ENCODE measurements at regions of chr16 and their contacts with region 1.

Region 1: DNA sequence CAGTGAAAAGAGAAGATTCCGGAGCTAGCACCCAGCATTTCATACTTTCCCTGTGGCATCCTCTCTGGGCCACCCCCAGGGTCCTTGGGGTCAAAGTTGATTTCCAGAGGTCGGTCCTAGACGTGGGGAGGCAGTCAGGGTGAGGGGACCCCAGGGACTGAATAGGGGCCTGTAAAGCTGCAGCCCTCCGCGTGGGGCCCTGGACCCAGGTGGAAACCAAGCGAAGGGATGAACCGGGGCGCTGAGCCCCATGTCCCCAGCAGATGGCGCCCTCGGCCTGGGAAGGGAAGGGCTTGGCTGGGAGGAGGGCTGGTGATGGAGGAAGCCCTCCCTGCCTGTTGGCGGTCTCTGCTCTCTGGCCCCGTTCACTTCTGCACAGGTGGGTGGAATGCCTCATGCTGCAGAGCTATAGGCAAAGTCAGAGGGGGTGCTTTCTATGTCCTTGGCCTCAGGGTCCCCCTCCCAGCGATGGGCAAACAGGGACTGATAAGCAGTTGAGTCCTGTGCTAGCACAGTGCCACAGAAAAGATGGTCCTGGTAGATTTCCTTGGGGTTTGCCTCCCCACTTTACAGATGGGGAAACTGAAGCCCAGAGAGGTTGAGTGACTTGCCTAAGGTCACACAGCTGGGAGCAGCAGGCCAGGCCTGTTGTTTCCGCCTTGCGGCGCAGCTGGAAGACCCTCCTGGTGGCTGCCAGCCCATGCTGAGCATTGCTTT is 163.4 kb upstream of the CIBAR2 start:
- H3K4me3 ChIP-seq: no peak overlapping the region
- H3K27ac ChIP-seq: no peak overlapping the region
- H3K4me1 ChIP-seq: no peaks in the 10 kb centered on the region
- CTCF ChIP-seq: peak; percentile 90

Region 2: GRCh38 chr16:85090873-85091521 is 184.7 kb before region 1 on chr16:
- CTCF ChIA-PET with region 1: no interaction called
- POLR2A ChIA-PET with region 1: no interaction called
- H3K4me3 ChIP-seq: no peak overlapping the region
- H3K27ac ChIP-seq: no peak overlapping the region
- H3K4me1 ChIP-seq: peaks cover 2% of the 10 kb centered on the region; the same call in 1 of the 2 replicates
- CTCF ChIP-seq: no peak

Region 3: DNA sequence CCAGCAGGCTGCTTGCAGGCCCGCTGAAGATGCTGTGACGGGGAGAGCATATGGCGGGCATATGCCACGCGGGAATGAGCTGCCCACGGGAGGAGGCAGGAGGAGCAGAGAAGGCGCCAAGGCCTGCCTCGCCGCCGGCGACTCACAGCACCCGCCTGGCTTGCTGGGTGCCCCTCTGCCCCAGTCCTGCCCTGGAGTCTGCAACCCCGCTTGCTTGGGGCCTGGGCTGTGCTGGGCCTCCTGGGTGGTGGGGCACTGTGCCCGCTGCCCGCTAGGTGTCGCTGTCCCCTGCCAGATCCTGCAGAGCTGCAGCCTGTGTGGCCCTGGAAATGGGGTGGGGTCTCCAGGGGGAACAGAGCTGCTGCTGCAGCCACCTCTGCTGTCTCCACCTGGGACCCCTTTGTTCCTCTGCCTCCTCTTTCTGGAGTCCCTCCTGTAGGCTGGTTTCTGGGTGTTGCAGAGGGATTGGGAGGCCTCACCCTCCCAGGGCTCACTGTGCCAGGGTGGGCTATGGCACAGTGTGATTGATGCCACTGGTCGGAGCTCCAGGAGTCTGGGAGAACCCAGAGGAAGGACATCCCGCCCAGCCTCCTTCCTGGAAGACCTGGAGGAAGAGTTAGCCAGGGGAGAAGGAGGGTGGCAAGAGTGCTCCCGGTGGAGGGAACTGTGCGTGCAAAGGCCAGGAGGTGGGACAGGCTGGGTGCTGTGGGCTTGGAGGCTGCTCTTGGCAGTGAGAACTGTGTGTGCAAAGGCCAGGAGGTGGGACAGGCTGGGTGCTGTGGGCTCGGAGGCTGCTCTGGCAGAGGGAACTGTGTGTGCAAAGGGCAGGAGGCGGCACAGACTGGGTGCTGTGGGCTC is 22.4 kb before region 1 on chr16:
- CTCF ChIA-PET with region 1: interaction called, 12 read pairs
- POLR2A ChIA-PET with region 1: no interaction called
- H3K4me3 ChIP-seq: no peak overlapping the region
- H3K27ac ChIP-seq: no peak overlapping the region
- H3K4me1 ChIP-seq: no peaks in the 10 kb centered on the region
- CTCF ChIP-seq: peak; percentile 86

Region 4: GRCh38 chr16:85258629-85259028 is 17.1 kb before region 1 on chr16:
- CTCF ChIA-PET with region 1: interaction called, 27 read pairs
- POLR2A ChIA-PET with region 1: no interaction called
- H3K4me3 ChIP-seq: no peak overlapping the region
- H3K27ac ChIP-seq: no peak overlapping the region
- H3K4me1 ChIP-seq: no peaks in the 10 kb centered on the region
- CTCF ChIP-seq: no peak

Region 5: DNA sequence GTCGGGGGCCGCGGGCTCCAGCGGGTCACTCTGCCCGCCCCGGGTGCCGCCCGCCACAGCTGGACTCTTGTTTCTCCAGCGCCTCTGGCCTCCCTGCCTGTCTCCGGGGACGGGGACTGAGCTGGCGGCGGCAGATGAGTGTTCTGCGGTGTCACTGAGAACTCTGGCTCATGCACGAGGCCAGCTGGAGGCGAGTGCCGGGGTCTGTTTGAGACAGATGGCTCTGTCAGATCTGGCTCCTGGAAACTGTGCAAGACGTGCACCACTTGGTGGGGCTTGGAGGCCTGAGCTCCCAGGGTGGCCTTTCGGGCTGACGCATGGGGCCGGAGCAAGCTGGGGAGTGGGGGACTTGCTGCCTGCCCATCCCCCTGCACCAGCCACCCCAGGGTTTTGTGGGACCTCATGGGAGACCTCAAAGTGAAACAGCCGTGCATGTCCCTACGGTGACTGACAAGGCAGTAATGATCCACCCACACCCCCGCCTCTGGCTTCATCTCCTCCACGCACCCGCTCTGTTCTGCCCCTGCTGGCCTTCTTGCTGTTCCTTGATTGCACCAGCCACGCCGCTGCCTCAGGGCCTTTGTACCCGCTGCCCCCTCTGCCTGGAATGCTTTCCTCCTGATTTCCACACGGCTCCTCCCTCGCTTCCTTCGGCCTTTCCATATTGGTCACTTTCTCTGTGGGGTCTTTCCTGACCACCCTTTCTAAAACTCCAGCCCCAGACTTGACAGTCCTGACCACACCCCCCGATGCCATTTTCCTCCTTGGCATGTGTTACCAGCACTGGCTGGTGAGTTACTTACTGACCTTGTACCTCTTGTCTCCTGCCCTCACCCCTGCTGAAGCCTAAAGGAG is 11.5 kb after region 1 on chr16:
- CTCF ChIA-PET with region 1: interaction called, 15 read pairs
- POLR2A ChIA-PET with region 1: interaction called, 3 read pairs
- H3K4me3 ChIP-seq: no peak overlapping the region
- H3K27ac ChIP-seq: no peak overlapping the region
- H3K4me1 ChIP-seq: no peaks in the 10 kb centered on the region
- CTCF ChIP-seq: no peak

Region 6: DNA sequence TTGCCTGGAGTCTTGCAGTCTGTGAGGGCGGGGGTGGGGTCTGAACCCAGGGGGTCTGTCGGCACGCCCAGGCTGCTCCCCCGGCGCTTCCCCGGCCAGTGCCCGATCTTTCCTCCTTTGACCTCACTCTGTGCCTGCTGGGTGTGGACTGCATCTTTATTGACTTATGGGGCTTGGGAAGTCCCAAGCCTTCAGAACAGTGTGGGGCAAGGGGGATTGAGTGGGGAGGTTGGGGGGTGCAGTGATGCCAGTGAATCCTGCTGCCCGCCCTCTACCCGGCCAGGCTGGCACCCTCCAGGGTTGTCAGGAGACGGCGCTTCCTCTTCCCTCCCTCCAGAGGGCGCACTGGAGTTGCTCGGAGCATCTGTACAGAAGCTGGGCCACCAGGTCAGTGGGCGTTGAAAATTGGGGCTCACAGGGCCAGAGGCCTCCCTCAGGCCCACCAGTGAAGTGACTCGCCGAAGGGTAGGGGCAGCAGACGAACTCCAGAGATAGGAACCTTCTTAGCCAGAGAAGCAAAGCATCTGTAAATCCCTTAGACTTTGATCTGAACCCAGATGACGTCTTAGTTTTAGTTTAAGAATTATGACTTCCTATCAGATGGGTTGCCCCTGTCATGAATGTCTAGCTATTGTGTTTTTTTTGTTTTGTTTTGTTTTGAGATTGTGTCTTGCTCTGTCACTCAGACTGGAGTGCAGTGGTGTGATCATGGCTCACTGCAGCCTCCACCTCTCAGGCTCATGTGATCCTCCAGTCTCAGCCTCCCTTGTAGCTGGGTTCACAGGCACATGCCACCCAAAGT is 21.4 kb after region 1 on chr16:
- CTCF ChIA-PET with region 1: interaction called, 10 read pairs
- POLR2A ChIA-PET with region 1: no interaction called
- H3K4me3 ChIP-seq: no peak overlapping the region
- H3K27ac ChIP-seq: no peak overlapping the region
- H3K4me1 ChIP-seq: no peaks in the 10 kb centered on the region
- CTCF ChIP-seq: peak; percentile 44; the same call in 1 of the 2 replicates